Activated naive CD4-positive, alpha-beta T cell treated with anti-CD3 and anti-CD28 coated beads for 36 hours (primary cell): ENCODE measurements at regions of chr12 and their contacts with region 1.

Region 1: GRCh38 chr12:49358483-49359141 is 8.7 kb upstream of the SPATS2 start:
- DNase-seq: peak; percentile 75
- H3K4me3 Mint-ChIP-seq: no peak overlapping the region
- H3K27ac Mint-ChIP-seq: no peak overlapping the region
- H3K4me1 Mint-ChIP-seq: peaks cover 2% of the 10 kb centered on the region
- H3K27me3 Mint-ChIP-seq: peaks cover 14% of the 10 kb centered on the region

Region 2: DNA sequence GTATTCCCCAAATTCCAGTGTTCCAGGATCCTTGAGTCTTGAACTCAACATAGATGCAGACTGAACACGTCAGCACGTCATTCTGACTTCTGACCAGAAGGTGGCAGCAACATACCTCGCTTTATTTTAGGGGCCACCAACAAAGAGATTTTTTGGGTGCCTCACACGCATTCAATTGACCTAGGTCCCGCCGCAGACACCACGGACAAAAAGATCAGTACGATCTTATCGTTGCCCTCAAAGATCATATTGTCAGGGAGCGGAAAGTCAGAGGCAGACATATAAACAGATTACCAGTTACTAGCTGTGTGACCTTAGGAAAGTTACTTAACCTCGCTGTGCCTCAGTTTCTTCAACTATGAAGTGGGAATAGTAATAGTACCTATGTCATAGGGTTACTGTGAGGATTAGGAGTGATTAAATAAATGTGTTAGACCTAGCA is 70.2 kb before region 1 on chr12:
- CTCF ChIA-PET with region 1: interaction called, 97 read pairs
- intact Hi-C with region 1: no loop called
- DNase-seq: peak; percentile 82
- H3K4me3 Mint-ChIP-seq: no peak overlapping the region
- H3K27ac Mint-ChIP-seq: no peak overlapping the region
- H3K4me1 Mint-ChIP-seq: no peaks in the 10 kb centered on the region
- H3K27me3 Mint-ChIP-seq: peaks cover 17% of the 10 kb centered on the region

Region 3: DNA sequence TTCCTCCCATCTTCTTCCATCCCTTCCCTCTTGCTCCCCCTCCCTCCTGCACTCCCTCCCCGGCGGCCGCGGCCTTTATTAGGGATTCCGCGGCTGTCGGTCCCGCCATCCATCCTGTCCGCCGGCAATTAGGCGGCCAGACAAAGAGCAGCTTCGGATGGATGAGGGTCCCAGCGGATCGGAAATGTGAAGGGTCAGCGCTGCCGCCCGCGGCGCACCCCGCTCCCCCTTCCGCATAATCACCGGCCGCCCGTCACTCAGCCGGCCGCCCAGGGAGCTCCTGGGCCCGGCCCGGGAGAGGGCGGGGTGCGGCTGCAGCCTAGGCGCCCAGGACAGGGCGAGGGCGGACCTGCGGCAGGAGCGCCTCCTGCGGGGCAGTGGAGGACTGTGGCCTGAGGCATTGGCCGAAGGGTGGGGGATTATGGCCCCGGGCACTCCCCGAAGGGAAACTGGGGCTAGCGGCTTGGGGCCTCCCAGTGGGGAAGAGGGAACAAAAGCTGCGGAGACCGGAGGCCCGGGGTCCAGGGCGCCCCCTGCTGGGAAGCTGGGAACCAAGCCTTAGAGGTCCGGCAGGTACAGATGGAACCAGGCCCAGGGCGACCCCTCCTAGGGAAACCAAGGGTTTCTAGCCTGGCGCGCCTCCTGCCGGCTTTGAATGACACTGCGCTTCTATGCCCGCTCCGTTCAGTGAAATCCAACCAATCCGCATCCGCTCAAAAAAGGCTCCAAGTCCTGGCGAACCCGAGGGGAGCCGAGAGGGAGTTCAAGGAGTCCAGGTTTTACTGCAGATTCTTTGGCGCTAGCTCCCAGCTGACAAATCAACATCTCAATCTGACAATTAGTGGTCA is 16.3 kb before region 1 on chr12:
- CTCF ChIA-PET with region 1: interaction called, 34 read pairs
- intact Hi-C with region 1: no loop called
- DNase-seq: peak; percentile 90
- H3K4me3 Mint-ChIP-seq: no peak overlapping the region
- H3K27ac Mint-ChIP-seq: no peak overlapping the region
- H3K4me1 Mint-ChIP-seq: peaks cover 48% of the 10 kb centered on the region
- H3K27me3 Mint-ChIP-seq: peaks cover 78% of the 10 kb centered on the region

Region 4: GRCh38 chr12:49413796-49414195 is 55.2 kb after region 1 on chr12:
- CTCF ChIA-PET with region 1: interaction called, 16 read pairs
- intact Hi-C with region 1: no loop called
- DNase-seq: no peak
- H3K4me3 Mint-ChIP-seq: no peak overlapping the region
- H3K27ac Mint-ChIP-seq: no peak overlapping the region
- H3K4me1 Mint-ChIP-seq: no peaks in the 10 kb centered on the region
- H3K27me3 Mint-ChIP-seq: no peaks in the 10 kb centered on the region

Region 5: GRCh38 chr12:49515266-49515665 is 156.7 kb after region 1 on chr12:
- CTCF ChIA-PET with region 1: interaction called, 267 read pairs
- intact Hi-C with region 1: loop called (anchors 1 kb)
- DNase-seq: no peak
- H3K4me3 Mint-ChIP-seq: no peak overlapping the region
- H3K27ac Mint-ChIP-seq: no peak overlapping the region
- H3K4me1 Mint-ChIP-seq: peaks cover 9% of the 10 kb centered on the region
- H3K27me3 Mint-ChIP-seq: no peaks in the 10 kb centered on the region

Region 6: DNA sequence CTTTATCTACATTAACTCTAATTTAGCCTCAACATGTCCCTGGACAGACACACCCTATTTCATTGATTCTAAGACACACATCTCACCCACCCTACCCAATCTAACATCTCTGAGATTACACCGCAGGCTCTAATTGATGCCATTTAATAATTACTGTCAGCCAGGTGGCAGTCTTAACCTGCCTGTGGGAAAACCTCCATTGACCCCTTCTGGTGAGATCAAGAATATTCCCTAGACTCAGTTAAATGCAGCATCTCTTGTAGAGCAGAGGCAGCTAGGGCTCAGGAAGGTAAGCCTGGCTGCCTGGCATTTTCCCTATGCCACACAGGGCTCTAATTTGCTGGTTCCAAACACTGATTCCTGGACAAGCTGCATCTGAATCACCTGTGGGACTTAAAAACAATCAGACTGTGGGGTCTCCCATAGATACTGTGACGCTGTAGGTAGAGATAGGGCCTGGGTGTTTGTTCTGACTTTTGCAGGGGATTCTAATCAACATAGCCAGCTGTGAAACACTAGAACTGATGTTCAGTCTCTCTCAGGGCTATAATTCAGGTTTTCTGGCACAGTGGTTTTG is 195.0 kb after region 1 on chr12:
- CTCF ChIA-PET with region 1: interaction called, 23 read pairs
- intact Hi-C with region 1: no loop called
- DNase-seq: peak; percentile 29
- H3K4me3 Mint-ChIP-seq: no peak overlapping the region
- H3K27ac Mint-ChIP-seq: no peak overlapping the region
- H3K4me1 Mint-ChIP-seq: peaks cover 4% of the 10 kb centered on the region
- H3K27me3 Mint-ChIP-seq: no peaks in the 10 kb centered on the region